ENCODE measurements at regions of chr3 and their contacts with region 1.

Region 1: DNA sequence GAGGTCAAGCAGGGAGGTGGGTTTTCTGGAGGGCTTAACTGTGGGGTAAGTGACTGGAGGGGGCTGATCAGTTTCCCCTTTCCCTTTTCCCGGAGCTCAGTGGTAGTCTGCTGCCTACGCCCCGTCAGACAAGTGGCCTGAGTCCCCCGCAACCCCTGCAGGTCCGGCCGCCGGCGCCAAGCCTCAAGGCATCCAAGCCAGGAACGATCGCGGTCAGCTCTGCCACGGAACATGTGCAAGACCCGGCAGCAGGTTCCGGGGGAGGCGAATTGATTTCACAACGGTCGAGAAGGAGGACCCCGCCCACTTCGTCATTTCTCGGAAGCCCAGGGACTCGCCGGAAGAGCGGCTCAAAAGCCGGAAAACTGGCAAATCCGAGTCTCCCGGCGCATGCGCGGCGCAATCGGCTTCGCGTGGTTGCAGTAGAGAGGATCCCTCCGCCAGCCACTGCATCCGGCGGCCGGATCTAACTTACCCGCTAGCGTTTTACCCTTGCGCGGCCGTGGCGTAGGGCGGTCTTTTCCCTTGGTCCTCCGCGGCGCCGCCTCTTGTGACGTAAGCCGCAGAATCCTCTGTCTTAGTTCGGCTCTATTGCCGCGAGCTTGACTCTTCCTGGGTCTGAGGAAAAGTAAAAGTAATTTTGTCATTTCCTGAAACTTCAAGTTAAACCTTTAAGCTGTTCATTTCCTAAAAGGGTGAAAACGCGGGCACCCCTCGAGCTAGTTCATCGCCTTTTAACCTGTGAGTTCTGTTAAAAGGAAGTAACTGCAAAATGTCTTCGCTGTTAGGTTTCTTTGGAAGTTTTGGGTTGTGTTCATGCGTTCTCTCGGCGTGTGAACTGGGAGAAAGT is 14.9 kb upstream of the CCNL1 start:
- DNase-seq: peak; percentile 92
- ATAC-seq: peak; percentile 97
- H3K4me3 ChIP-seq: peak overlapping the region; percentile 86 to 91
- H3K27ac ChIP-seq: peak overlapping the region; percentile 100
- H3K4me1 ChIP-seq: peaks cover 14% of the 10 kb centered on the region
- H3K27me3 ChIP-seq: no peaks in the 10 kb centered on the region
- CTCF ChIP-seq: no peak

Region 2: GRCh38 chr3:156291272-156292123 is 883.4 kb before region 1 on chr3:
- CTCF ChIA-PET with region 1: no interaction called
- POLR2A ChIA-PET with region 1: no interaction called
- in situ Hi-C with region 1: no loop called
- intact Hi-C with region 1: no loop called
- DNase-seq: no peak
- ATAC-seq: peak; percentile 60
- H3K4me3 ChIP-seq: peak overlapping the region in 1 of 2 experiments; percentile 36; a peak in 1 of 4 replicates
- H3K27ac ChIP-seq: no peak overlapping the region
- H3K4me1 ChIP-seq: no peaks in the 10 kb centered on the region; the same call in 1 of the 2 replicates
- H3K27me3 ChIP-seq: peaks cover 46% of the 10 kb centered on the region
- CTCF ChIP-seq: no peak

Region 3: GRCh38 chr3:157159762-157160657 is 14.9 kb before region 1 on chr3 and contains the start of gene CCNL1:
- CTCF ChIA-PET with region 1: interaction called, 3 read pairs
- POLR2A ChIA-PET with region 1: interaction called, 59 read pairs
- in situ Hi-C with region 1: no loop called
- intact Hi-C with region 1: loop called (anchors 1 kb)
- DNase-seq: peak; percentile 82
- ATAC-seq: peak; percentile 94
- H3K4me3 ChIP-seq: peak within 1 kb of the TSS; percentile 71 to 88
- H3K27ac ChIP-seq: peak within 1 kb of the TSS; percentile 100
- H3K4me1 ChIP-seq: peaks cover 37% of the 10 kb centered on the region
- H3K27me3 ChIP-seq: no peaks in the 10 kb centered on the region
- CTCF ChIP-seq: no peak
- total RNA-seq, gene CCNL1: 118 TPM

Measured in Panc1 (cell line).